AG04450 (cell line): ENCODE measurements at regions of chr4 and their contacts with region 1.

Region 1: GRCh38 chr4:78379991-78380729 is 171.4 kb upstream of the ANXA3 start:
- DNase-seq: no peak
- H3K4me3 ChIP-seq: no peak overlapping the region
- H3K27ac ChIP-seq: no peak overlapping the region
- H3K27me3 ChIP-seq: no peaks in the 10 kb centered on the region
- CTCF ChIP-seq: no peak

Region 2: GRCh38 chr4:77899607-77900006 is 480.6 kb before region 1 on chr4:
- CTCF ChIA-PET with region 1: interaction called, 13 read pairs
- POLR2A ChIA-PET with region 1: no interaction called
- DNase-seq: no peak
- H3K4me3 ChIP-seq: no peak overlapping the region
- H3K27ac ChIP-seq: no peak overlapping the region
- H3K27me3 ChIP-seq: no peaks in the 10 kb centered on the region
- CTCF ChIP-seq: no peak

Region 3: GRCh38 chr4:78397292-78397630 is 17.1 kb after region 1 on chr4:
- CTCF ChIA-PET with region 1: no interaction called
- POLR2A ChIA-PET with region 1: no interaction called
- DNase-seq: no peak
- H3K4me3 ChIP-seq: no peak overlapping the region
- H3K27ac ChIP-seq: no peak overlapping the region
- H3K27me3 ChIP-seq: no peaks in the 10 kb centered on the region
- CTCF ChIP-seq: no peak